ENCODE measurements at regions of chr2 and their contacts with region 1.

Region 1: GRCh38 chr2:166127217-166128155 is at the start of gene SCN1A:
- DNase-seq: no peak
- ATAC-seq: no peak
- H3K4me3 ChIP-seq: no peak within 1 kb of the TSS
- H3K27ac ChIP-seq: no peak within 1 kb of the TSS
- H3K4me1 ChIP-seq: no peaks in the 10 kb centered on the region
- H3K27me3 ChIP-seq: no peaks in the 10 kb centered on the region
- CTCF ChIP-seq: peak in 4 of 5 experiments; percentile 23 to 72 (median 42)
- POLR2A ChIP-seq: no peak
- total RNA-seq, gene SCN1A: not detected

Region 2: DNA sequence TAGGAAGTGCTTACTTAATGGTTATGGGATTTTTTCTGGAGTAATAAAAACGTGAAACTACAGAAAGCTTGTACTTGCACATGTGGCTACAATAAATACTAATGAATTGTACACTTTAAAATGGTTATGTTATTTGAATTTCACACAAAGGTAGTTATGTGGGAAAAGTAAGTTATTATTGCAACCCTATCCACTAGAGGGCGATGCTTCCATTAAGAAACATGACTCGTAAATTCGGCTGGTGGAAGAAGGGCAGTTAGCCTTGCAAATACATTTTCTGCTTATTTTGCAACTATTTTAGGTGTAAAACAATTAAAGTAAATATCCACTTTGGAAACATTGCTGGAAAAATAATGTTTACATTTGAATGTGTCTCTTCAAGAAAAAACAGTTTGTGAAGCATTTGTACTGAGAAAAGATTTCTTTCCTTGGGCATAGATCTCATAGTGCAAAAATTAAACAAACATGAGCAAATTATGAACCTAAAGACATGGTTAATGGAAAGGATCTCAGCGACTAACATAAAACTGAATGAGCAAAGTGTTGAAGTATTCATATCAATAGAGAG is 726.1 kb before region 1 on chr2:
- in situ Hi-C with region 1: no loop called
- intact Hi-C with region 1: loop called (anchors 10 kb)
- DNase-seq: no peak
- ATAC-seq: no peak
- H3K4me3 ChIP-seq: no peak overlapping the region
- H3K27ac ChIP-seq: no peak overlapping the region
- H3K4me1 ChIP-seq: no peaks in the 10 kb centered on the region
- H3K27me3 ChIP-seq: no peaks in the 10 kb centered on the region
- CTCF ChIP-seq: peak in 4 of 5 experiments; percentile 23 to 59 (median 47)
- POLR2A ChIP-seq: no peak

Region 3: GRCh38 chr2:165953655-165954606 is 173.6 kb before region 1 on chr2 and contains the start of gene TTC21B:
- in situ Hi-C with region 1: loop called (anchors 5 to 25 kb)
- intact Hi-C with region 1: loop called (anchors 2 kb)
- DNase-seq: peak; percentile 90 to 91
- ATAC-seq: peak; percentile 91 to 95
- H3K4me3 ChIP-seq: peak within 1 kb of the TSS; percentile 77 to 96 (median 84)
- H3K27ac ChIP-seq: peak within 1 kb of the TSS; percentile 85 to 93 (median 88)
- H3K4me1 ChIP-seq: peaks cover 23 to 28% of the 10 kb centered on the region in 2 donors
- H3K27me3 ChIP-seq: no peaks in the 10 kb centered on the region
- CTCF ChIP-seq: peak; percentile 80 to 86 (median 83)
- POLR2A ChIP-seq: peak; percentile 49 to 72
- total RNA-seq, gene TTC21B: 11.2 to 17.8 (median 13.0) TPM

Region 4: GRCh38 chr2:166057370-166058164 is 69.9 kb before region 1 on chr2:
- in situ Hi-C with region 1: no loop called
- intact Hi-C with region 1: loop called (anchors 5 kb)
- DNase-seq: no peak
- ATAC-seq: no peak
- H3K4me3 ChIP-seq: no peak overlapping the region
- H3K27ac ChIP-seq: no peak overlapping the region
- H3K4me1 ChIP-seq: no peaks in the 10 kb centered on the region
- H3K27me3 ChIP-seq: no peaks in the 10 kb centered on the region
- CTCF ChIP-seq: peak in 2 of 5 experiments; percentile 27 to 47
- POLR2A ChIP-seq: no peak

Measured in gastrocnemius medialis (tissue), 4 donors.